GM23248 (cell line): ENCODE measurements at regions of chr2 and their contacts with region 1.

Region 1: DNA sequence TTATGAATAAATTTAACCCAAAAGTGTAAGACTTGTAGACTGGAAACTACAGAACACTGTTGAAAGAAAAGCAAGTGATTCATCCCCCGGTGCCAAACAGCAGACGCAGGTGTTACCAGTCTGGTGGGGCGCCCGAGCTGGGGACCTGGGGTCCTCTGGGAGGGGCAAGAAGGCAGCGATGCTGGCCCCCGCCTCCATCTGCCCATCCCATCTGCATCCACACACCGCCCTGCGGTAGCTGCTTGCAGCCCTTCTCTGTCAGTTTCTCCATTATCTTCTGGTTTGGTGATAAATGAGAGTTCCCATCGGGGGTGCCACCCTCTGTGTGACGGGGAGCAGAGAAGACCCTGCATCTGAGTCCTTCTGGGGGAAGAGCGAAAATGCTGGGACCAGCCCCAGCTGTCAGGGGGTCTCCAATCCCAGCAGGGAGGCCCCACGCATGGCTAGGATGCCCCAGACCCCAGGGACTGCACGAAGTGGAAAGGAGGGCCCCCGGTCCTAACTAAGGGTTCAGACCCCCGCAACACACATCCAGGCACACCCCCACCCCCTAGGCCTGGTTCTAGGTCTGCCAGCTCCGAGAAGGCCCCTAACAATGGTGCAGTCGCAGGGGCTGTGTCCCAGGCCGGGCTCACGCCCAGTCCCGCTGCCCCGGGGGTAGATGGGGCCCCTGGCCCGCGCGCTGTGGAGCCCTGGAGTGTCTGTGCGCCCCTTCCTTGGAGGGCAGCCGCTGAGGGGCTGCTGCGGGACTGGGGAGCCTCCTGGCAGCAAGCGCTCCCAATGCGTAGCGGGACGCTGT is 686 bp upstream of the RGPD8 start:
- DNase-seq: peak; percentile 1
- H3K4me3 ChIP-seq: no peak overlapping the region
- H3K27ac ChIP-seq: no peak overlapping the region
- H3K4me1 ChIP-seq: 0 out of 2 replicates have a peak, but pooled peaks cover 3% of the 10 kb centered on the region
- H3K27me3 ChIP-seq: peaks cover 5% of the 10 kb centered on the region; the same call in 1 of the 2 replicates

Region 2: DNA sequence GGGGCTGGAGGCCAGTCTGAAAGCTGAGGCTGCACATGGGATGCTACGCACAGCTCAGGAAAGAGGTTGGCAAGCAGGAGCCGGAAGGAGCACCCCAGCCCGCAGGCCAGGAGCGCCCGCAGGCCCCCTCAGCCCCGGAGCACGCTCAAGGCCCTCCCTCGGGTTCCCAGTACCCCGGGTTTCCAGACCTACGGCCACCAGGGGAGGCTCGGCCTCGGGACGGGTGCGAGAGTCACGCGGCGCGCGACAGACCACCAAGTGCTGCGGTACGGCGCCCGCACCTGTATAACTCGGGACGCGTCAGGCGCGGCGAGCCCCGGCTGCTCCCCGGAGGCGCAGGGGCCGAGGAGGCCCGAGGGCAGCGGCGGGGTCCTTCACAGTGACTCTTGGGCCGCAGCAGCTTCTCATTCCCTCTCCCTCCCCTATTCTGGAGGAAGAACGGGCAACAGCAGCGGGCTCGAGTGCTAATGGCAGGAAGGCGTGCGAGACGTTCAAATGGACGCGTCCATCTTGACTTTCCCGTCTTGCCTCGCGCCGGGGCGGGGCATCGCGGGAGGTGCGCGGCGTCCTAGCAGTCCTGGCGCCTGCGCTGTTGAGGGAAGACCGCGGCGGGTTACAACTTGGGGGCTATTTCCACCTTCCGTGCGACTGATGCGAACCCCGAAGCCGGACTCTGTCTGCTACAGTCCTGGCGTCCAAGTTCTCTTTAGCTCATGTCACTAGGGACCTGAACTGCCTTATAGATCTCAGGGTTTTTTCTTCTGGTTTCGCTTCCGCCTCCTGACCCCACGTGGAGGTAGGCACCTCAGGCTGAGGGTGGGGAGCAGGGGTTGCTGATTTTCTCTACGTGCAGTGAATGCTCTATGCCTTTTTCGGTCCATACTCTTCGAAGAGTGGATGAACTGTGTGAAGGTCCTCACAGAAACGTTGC is 550.2 kb before region 1 on chr2 and contains the start of gene ANAPC1:
- in situ Hi-C with region 1: loop called (anchors 25 kb)
- DNase-seq: peak; percentile 97
- H3K4me3 ChIP-seq: peak within 1 kb of the TSS; percentile 97
- H3K27ac ChIP-seq: peak within 1 kb of the TSS; percentile 49
- H3K4me1 ChIP-seq: 0 out of 2 replicates have a peak, but pooled peaks cover 7% of the 10 kb centered on the region
- H3K27me3 ChIP-seq: no peaks in the 10 kb centered on the region
- total RNA-seq, gene ANAPC1: 26.5 and 35.7 TPM in 2 replicates